Endothelial cell of umbilical vein (primary cell): ENCODE measurements at regions of chr3 and their contacts with region 1.

Region 1: DNA sequence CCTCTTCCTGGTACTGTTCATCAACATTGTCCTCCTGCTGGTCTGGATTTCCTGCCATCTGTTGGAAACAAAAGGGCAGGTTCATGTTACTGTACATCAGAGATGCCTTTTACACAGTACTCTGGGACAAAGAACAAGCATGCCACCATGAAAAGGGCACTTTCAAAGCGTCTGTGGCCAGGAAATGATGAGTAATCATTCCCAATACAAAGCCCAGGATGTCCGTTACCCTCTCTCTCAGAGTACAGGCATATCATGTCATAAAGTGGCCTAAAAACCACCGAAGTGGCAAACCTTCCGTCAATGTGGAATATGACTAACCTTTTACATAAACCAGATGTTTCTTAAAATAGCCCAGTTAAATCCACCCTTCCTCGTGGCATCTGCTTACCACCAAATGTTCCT is 71.2 kb downstream of the GOLIM4 start:
- DNase-seq: peak; percentile 79
- H3K4me3 ChIP-seq: no peak overlapping the region
- H3K27ac ChIP-seq: peak overlapping the region; percentile 77
- H3K4me1 ChIP-seq: peaks cover 19% of the 10 kb centered on the region
- H3K27me3 ChIP-seq: no peaks in the 10 kb centered on the region
- CTCF ChIP-seq: no peak
- POLR2A ChIP-seq: no peak

Region 2: DNA sequence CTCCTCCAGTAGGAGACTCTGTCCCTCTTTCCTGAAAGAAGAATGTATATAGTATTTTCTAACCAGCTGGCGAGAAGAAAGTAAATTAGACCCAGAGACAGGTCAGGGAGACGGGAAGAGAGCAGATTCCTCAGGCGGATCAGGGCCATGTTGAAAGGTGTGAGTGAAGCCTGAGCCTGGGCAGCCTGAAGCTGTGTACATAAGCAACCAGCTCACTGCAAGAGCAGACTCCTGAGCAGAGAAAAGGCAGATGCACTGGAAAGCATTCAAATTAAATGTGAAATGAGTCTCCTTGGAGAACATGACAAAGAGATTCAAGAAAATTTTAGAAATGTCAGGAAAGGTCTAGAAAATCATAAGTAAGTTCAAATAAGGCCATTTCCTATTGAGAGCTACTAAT is 94.6 kb before region 1 on chr3:
- CTCF ChIA-PET with region 1: no interaction called
- POLR2A ChIA-PET with region 1: no interaction called
- dilution Hi-C with region 1: no loop called
- intact Hi-C with region 1: loop called (anchors 5 kb)
- DNase-seq: no peak
- H3K4me3 ChIP-seq: no peak overlapping the region
- H3K27ac ChIP-seq: no peak overlapping the region
- H3K4me1 ChIP-seq: no peaks in the 10 kb centered on the region
- H3K27me3 ChIP-seq: peaks cover 0 to 4% of the 10 kb centered on the region in 2 experiments
- CTCF ChIP-seq: no peak
- POLR2A ChIP-seq: no peak

Region 3: DNA sequence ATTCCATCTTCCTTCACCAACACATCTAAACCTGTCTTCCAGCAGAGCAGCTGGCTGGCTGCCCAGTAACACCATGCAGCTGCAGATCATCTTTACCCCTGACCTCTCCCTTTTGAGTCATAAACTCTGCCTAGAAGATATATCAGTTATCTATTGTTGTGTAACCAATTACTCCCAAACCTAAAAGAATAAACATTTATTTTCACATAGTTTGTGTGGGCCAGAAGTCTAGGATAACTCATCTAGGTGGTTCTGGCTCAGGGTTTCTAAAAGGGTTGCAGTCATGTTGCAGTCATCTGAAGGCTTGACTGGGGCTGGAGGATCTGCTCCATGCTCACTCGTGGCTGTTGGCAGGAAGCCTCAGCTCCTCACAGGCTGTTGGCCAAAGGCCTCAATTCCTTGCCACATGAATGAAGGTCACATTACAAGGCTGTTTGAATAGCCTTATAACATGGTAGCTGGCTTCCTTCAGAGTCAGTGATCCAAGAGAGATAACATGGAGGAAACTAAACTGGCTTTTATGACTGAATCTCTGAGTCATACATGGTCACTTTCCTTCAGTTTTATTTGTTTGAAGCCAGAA is 21.7 kb before region 1 on chr3:
- CTCF ChIA-PET with region 1: no interaction called
- POLR2A ChIA-PET with region 1: no interaction called
- dilution Hi-C with region 1: no loop called
- intact Hi-C with region 1: loop called (anchors 1 kb)
- DNase-seq: peak; percentile 40
- H3K4me3 ChIP-seq: no peak overlapping the region
- H3K27ac ChIP-seq: no peak overlapping the region
- H3K4me1 ChIP-seq: peaks cover 3% of the 10 kb centered on the region
- H3K27me3 ChIP-seq: no peaks in the 10 kb centered on the region
- CTCF ChIP-seq: no peak
- POLR2A ChIP-seq: no peak

Region 4: DNA sequence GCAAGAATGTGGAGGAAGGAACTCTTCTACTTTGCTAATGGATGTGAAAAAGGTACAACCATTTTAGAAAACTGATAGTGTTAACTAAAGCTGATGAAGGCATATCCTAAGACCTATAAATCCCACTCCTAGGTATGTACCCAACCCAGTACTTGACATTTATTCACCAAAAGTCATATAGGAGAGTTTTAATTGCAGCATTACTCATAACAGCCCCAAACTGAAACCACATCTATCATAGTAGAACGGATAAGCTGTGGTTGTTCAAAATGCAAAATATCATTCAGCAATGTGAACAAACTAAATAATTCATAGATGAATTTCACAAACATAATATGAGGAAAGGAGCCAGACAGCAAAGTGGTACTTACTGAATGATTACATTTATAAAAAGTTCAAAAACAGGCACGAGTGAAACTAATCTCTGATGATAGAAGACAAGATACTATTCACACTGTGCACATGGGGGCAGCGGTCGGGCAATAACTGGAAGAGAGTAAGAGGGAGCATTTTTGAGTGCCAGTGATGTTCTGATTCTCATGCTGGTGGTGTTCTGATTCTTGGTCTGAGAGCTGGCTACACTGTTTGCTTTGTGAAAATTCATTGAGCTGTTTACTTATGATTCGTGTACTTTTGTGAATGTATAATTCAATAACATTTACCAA is 36.9 kb after region 1 on chr3:
- CTCF ChIA-PET with region 1: no interaction called
- POLR2A ChIA-PET with region 1: no interaction called
- dilution Hi-C with region 1: no loop called
- intact Hi-C with region 1: no loop called
- DNase-seq: no peak
- H3K4me3 ChIP-seq: no peak overlapping the region
- H3K27ac ChIP-seq: no peak overlapping the region
- H3K4me1 ChIP-seq: no peaks in the 10 kb centered on the region
- H3K27me3 ChIP-seq: no peaks in the 10 kb centered on the region
- CTCF ChIP-seq: no peak
- POLR2A ChIP-seq: no peak